ENCODE measurements at regions of chr7 and their contacts with region 1.

Region 1: DNA sequence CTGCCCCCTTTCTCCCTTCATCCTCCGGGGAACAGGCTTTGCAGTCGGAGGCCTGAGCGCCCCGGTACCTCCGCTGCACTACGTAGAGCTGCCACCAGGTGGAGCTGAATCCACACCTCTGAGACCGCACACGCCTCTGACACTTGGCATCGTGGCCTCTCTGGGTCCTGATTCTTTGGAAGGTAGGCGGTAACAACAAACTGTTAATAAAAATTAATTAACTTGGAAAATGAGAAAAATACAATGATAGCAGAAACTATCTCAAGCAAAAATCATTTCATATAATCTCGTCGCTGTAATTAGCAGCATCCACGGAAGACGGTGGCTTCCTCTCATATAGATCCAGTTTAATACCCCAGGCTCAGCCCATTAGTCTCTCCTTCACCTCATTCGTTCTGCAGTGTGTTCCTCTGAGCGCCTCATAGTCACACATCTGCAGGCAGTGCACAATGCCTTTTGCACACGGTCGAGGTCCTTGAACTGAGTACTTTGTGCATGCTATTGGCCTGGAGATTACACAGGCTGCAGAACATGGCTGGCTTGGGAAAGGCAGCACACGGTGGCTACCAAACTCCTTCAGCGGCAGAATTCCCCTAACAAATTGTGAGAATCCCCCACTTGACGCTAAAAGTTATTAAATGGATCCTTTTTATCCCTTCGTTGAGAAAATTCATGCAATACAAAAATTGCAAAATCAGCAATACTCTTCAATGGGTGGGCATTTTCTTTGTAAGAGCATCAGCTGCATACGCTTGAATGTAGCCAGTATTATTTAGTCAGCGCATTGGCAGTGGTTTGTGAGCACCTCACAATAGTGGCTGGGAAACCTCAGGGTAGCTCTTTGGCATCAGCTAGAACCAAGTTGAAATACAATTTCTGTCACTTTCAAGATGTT is 18.7 kb downstream of the OR9A2 start:
- DNase-seq: peak; percentile 94
- H3K4me3 Mint-ChIP-seq: no peak overlapping the region
- H3K27ac Mint-ChIP-seq: no peak overlapping the region
- H3K4me1 Mint-ChIP-seq: peaks cover 5% of the 10 kb centered on the region
- H3K27me3 Mint-ChIP-seq: peaks cover 17% of the 10 kb centered on the region

Region 2: DNA sequence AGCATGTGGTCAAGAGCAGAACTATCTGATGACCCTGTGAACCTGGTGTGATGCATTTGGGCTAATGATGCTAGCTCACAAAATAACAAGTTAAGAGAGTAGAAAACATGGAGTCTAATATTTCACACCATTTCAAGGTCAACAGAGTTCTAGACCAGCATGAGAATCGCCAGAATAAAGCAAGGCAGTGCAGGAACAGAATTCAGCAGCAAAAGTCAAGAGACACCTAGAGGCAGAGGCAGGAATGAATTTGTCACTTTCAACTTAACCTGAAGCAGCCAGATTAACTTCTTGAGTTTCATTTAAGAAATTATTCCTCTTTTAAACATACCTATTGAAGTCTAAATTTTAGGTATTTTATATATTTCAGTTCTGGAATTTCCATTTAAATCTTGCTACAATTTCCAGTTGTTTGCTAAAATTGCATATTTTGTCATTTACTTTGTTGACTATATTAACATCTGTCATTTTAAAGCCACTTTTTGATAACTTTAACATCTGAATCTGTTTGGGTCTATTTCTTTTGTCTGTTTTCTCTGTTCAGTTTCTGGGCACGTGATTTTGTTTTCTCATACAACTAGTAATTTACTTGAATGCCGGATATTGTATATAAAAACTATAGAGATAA is 706.2 kb before region 1 on chr7:
- intact Hi-C with region 1: loop called (anchors 5 kb)
- DNase-seq: peak; percentile 65
- H3K4me3 Mint-ChIP-seq: no peak overlapping the region
- H3K27ac Mint-ChIP-seq: no peak overlapping the region
- H3K4me1 Mint-ChIP-seq: peaks cover 5% of the 10 kb centered on the region
- H3K27me3 Mint-ChIP-seq: peaks cover 19% of the 10 kb centered on the region

Region 3: DNA sequence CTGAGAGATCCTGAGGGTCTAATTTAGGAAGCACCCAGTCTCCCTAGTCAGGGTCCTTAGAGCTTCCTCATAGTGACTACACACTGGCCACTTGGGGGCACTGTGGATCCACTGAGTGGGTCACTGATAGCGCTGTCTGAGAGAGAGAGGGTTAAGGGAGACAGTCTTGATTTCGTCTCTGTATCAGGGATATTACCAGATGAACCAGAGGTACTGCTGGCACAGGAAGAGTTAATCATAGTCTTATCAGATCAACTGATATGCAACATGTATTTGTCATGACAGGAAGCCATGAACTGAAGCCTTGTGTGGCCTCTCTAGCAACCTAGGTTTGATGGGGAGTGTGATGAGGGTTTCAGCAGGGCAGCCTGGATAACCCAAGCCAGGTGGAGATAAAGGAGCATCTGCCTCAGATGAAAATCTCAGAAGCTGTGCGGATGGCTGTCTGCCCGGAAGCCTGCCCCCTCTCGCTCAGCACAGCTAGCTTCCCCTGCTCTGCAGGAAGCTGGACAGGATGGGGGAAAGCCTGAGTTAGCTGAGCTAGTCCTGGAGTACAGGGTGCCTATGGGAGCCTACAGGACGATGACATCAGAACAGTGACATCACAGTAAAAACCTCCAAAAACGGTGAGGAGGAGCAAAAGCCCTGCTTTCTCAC is 473.0 kb before region 1 on chr7:
- intact Hi-C with region 1: loop called (anchors 1 kb)
- DNase-seq: peak; percentile 91
- H3K4me3 Mint-ChIP-seq: peak overlapping the region; percentile 74
- H3K27ac Mint-ChIP-seq: peak overlapping the region; percentile 80
- H3K4me1 Mint-ChIP-seq: peaks cover 23% of the 10 kb centered on the region
- H3K27me3 Mint-ChIP-seq: peaks cover 12% of the 10 kb centered on the region

Region 4: DNA sequence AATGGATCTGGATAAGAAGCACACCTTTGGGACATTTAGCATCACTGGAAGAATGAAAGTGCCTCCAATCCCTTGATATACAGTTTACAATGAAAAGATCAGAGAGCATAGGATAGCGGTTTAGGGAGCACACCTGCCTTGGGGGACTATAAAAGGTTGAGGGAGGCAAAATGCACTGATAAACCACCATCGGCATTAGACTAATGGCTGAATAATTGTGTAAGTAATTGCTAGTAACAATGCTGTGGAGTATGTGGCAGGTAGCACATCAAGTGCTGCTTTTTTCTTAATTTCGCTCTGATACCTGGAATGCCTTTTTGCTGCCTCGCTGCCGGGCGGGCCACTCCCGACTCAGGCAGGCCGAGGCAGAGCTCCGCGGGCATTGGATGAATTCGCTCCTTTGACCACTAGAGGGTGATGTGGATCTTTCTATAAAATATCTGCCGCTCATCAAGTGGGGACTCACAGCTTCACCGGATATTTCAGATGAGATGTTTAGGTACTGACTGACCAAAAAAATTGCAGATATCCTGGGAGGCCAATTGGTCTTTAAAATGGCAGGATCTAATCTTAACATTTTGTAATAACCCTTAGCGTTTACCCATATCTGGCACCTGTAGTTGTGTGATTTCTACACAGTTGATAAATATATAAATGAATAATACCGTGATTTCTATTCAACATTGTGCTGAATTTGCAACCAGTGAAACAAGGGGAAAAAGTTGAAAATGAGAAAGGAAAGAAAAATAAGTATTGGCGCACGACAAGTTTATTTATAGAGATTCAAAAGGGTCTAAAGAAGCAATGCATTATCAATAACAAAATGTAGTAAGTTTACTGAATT is 375.7 kb before region 1 on chr7:
- intact Hi-C with region 1: loop called (anchors 5 kb)
- DNase-seq: peak; percentile 86
- H3K4me3 Mint-ChIP-seq: no peak overlapping the region
- H3K27ac Mint-ChIP-seq: no peak overlapping the region
- H3K4me1 Mint-ChIP-seq: peaks cover 13% of the 10 kb centered on the region
- H3K27me3 Mint-ChIP-seq: peaks cover 12% of the 10 kb centered on the region

Region 5: DNA sequence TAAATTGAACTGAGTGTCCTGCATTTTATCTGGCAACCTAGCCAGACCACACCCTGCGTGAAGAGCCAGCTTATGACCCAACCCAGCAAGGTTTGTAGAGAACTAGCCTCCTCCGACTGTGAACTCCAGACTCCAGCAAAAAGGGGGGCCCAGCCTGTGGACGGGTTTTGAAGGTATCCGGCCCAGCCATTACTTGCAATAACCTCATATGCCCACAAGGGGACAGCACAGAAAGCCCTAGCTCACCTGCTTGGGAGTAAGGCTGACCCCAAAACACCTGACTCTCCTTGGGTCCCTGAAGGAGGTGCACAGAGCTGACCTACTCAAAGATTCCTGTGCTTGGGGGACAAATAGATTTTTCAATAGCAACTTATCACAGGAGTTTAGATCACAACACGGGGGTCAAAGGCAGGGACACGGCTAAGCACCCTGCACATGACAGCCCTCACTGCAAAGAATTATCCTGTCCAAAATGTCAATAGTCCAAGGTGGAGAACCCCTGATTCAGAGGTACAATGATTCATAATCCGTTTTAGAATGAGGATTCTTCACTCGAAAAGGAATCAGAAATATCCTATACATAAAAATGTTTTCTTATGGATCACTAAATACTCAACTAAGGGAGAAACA is 127.3 kb before region 1 on chr7:
- intact Hi-C with region 1: loop called (anchors 2 kb)
- DNase-seq: peak; percentile 85
- H3K4me3 Mint-ChIP-seq: no peak overlapping the region
- H3K27ac Mint-ChIP-seq: no peak overlapping the region
- H3K4me1 Mint-ChIP-seq: no peaks in the 10 kb centered on the region
- H3K27me3 Mint-ChIP-seq: peaks cover 9% of the 10 kb centered on the region

Region 6: GRCh38 chr7:143068446-143068845 is 60.2 kb after region 1 on chr7:
- intact Hi-C with region 1: no loop called
- DNase-seq: no peak
- H3K4me3 Mint-ChIP-seq: no peak overlapping the region
- H3K27ac Mint-ChIP-seq: no peak overlapping the region
- H3K4me1 Mint-ChIP-seq: no peaks in the 10 kb centered on the region
- H3K27me3 Mint-ChIP-seq: no peaks in the 10 kb centered on the region

Region 7: GRCh38 chr7:143305423-143306070 is 297.3 kb after region 1 on chr7:
- intact Hi-C with region 1: loop called (anchors 10 kb)
- DNase-seq: peak; percentile 90
- H3K4me3 Mint-ChIP-seq: no peak overlapping the region
- H3K27ac Mint-ChIP-seq: peak overlapping the region; percentile 39
- H3K4me1 Mint-ChIP-seq: peaks cover 64% of the 10 kb centered on the region
- H3K27me3 Mint-ChIP-seq: no peaks in the 10 kb centered on the region